Mammary epithelial cell (primary cell): ENCODE measurements at regions of chr18 and their contacts with region 1.

Region 1: GRCh38 chr18:44098551-44099098 is 582.1 kb upstream of the SETBP1 start:
- DNase-seq: peak; percentile 56
- H3K4me3 ChIP-seq: no peak overlapping the region
- H3K27ac ChIP-seq: no peak overlapping the region
- H3K4me1 ChIP-seq: no peaks in the 10 kb centered on the region
- H3K27me3 ChIP-seq: no peaks in the 10 kb centered on the region
- CTCF ChIP-seq: peak; percentile 40 to 54

Region 2: GRCh38 chr18:43661570-43661969 is 437.1 kb before region 1 on chr18:
- CTCF ChIA-PET with region 1: interaction called, 3 read pairs
- dilution Hi-C with region 1: no loop called
- in situ Hi-C with region 1: no loop called
- intact Hi-C with region 1: loop called (anchors 2 kb)
- DNase-seq: peak; percentile 79
- H3K4me3 ChIP-seq: no peak overlapping the region
- H3K27ac ChIP-seq: no peak overlapping the region
- H3K4me1 ChIP-seq: peaks cover 9% of the 10 kb centered on the region
- H3K27me3 ChIP-seq: no peaks in the 10 kb centered on the region
- CTCF ChIP-seq: peak; percentile 64 to 76

Region 3: GRCh38 chr18:44149706-44150105 is 51.1 kb after region 1 on chr18:
- CTCF ChIA-PET with region 1: no interaction called
- dilution Hi-C with region 1: no loop called
- in situ Hi-C with region 1: no loop called
- intact Hi-C with region 1: no loop called
- DNase-seq: peak; percentile 94
- H3K4me3 ChIP-seq: peak overlapping the region in 1 of 3 experiments; percentile 54
- H3K27ac ChIP-seq: peak overlapping the region; percentile 87
- H3K4me1 ChIP-seq: peaks cover 21% of the 10 kb centered on the region
- H3K27me3 ChIP-seq: no peaks in the 10 kb centered on the region
- CTCF ChIP-seq: no peak

Region 4: GRCh38 chr18:44437603-44438002 is 339.0 kb after region 1 on chr18:
- CTCF ChIA-PET with region 1: no interaction called
- dilution Hi-C with region 1: no loop called
- in situ Hi-C with region 1: no loop called
- intact Hi-C with region 1: loop called (anchors 2 kb)
- DNase-seq: no peak
- H3K4me3 ChIP-seq: no peak overlapping the region
- H3K27ac ChIP-seq: no peak overlapping the region
- H3K4me1 ChIP-seq: no peaks in the 10 kb centered on the region
- H3K27me3 ChIP-seq: no peaks in the 10 kb centered on the region
- CTCF ChIP-seq: no peak

Region 5: GRCh38 chr18:45014047-45014501 is 915.4 kb after region 1 on chr18:
- CTCF ChIA-PET with region 1: no interaction called
- dilution Hi-C with region 1: no loop called
- in situ Hi-C with region 1: no loop called
- intact Hi-C with region 1: loop called (anchors 5 kb)
- DNase-seq: peak; percentile 91
- H3K4me3 ChIP-seq: no peak overlapping the region
- H3K27ac ChIP-seq: no peak overlapping the region
- H3K4me1 ChIP-seq: peaks cover 48% of the 10 kb centered on the region
- H3K27me3 ChIP-seq: no peaks in the 10 kb centered on the region
- CTCF ChIP-seq: peak; percentile 30 to 42